B cell (primary cell): ENCODE measurements at regions of chr3 and their contacts with region 1.

Region 1: GRCh38 chr3:42780892-42781700 is 8.0 kb upstream of the CCDC13 start:
- DNase-seq: peak; percentile 84
- ATAC-seq: peak; percentile 84
- H3K4me3 ChIP-seq: no peak overlapping the region
- H3K4me3 Mint-ChIP-seq: no peak overlapping the region
- H3K27ac ChIP-seq: no peak overlapping the region
- H3K27ac Mint-ChIP-seq: no peak overlapping the region
- H3K4me1 ChIP-seq: no peaks in the 10 kb centered on the region
- H3K4me1 Mint-ChIP-seq: peaks cover 2% of the 10 kb centered on the region
- H3K27me3 ChIP-seq: no peaks in the 10 kb centered on the region
- H3K27me3 Mint-ChIP-seq: no peaks in the 10 kb centered on the region
- CTCF ChIP-seq: peak; percentile 80

Region 2: DNA sequence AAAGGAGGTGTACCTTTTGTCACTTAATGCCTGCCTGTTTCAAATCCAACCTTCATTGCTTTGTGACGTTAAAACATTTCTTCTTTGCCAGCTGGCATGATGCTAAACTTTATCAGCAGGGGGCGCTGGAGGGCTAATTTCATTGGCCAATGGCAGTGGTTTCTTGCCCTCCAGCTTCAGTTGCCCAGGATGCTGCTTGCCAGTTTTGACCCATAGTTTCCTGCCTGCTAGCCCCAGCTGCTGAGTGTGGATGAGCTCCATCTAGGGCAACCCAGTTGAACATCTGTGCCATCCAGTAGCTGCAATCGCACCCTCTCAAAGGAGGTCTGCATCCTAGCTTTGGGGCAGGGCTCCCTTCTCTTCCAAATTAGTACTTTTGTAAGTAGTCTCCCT is 50.2 kb after region 1 on chr3:
- CTCF ChIA-PET with region 1: interaction called, 14 read pairs
- POLR2A ChIA-PET with region 1: no interaction called
- intact Hi-C with region 1: loop called (anchors 1 kb)
- DNase-seq: peak; percentile 81
- ATAC-seq: peak; percentile 76
- H3K4me3 ChIP-seq: no peak overlapping the region
- H3K4me3 Mint-ChIP-seq: no peak overlapping the region
- H3K27ac ChIP-seq: no peak overlapping the region
- H3K27ac Mint-ChIP-seq: no peak overlapping the region
- H3K4me1 ChIP-seq: no peaks in the 10 kb centered on the region
- H3K4me1 Mint-ChIP-seq: peaks cover 4% of the 10 kb centered on the region
- H3K27me3 ChIP-seq: no peaks in the 10 kb centered on the region
- H3K27me3 Mint-ChIP-seq: peaks cover 15% of the 10 kb centered on the region
- CTCF ChIP-seq: peak; percentile 88

Region 3: GRCh38 chr3:42839616-42840015 is 58.5 kb after region 1 on chr3:
- CTCF ChIA-PET with region 1: interaction called, 21 read pairs
- POLR2A ChIA-PET with region 1: no interaction called
- intact Hi-C with region 1: loop called (anchors 2 kb)
- DNase-seq: peak; percentile 73
- ATAC-seq: peak; percentile 99
- H3K4me3 ChIP-seq: peak overlapping the region in 1 of 5 experiments; percentile 19
- H3K4me3 Mint-ChIP-seq: peak overlapping the region; percentile 58
- H3K27ac ChIP-seq: no peak overlapping the region
- H3K27ac Mint-ChIP-seq: peak overlapping the region; percentile 46
- H3K4me1 ChIP-seq: peaks cover under 1 to 6% of the 10 kb centered on the region in 2 donors
- H3K4me1 Mint-ChIP-seq: peaks cover 6% of the 10 kb centered on the region
- H3K27me3 ChIP-seq: no peaks in the 10 kb centered on the region
- H3K27me3 Mint-ChIP-seq: no peaks in the 10 kb centered on the region
- CTCF ChIP-seq: peak; percentile 76